ENCODE measurements at regions of chr10 and their contacts with region 1.

Region 1: GRCh38 chr10:89793649-89794254 is 92.4 kb downstream of the KIF20B start:
- DNase-seq: peak; percentile 31
- H3K4me3 ChIP-seq: no peak overlapping the region
- H3K27ac ChIP-seq: no peak overlapping the region
- H3K4me1 ChIP-seq: no peaks in the 10 kb centered on the region
- H3K27me3 ChIP-seq: no peaks in the 10 kb centered on the region
- CTCF ChIP-seq: peak; percentile 67

Region 2: GRCh38 chr10:89516149-89516832 is 277.5 kb before region 1 on chr10:
- intact Hi-C with region 1: no loop called
- DNase-seq: peak; percentile 32
- H3K4me3 ChIP-seq: no peak overlapping the region
- H3K27ac ChIP-seq: peak overlapping the region; percentile 3
- H3K4me1 ChIP-seq: no peaks in the 10 kb centered on the region
- H3K27me3 ChIP-seq: no peaks in the 10 kb centered on the region
- CTCF ChIP-seq: no peak

Region 3: GRCh38 chr10:89954787-89955566 is 161.2 kb after region 1 on chr10:
- intact Hi-C with region 1: loop called (anchors 10 kb)
- DNase-seq: no peak
- H3K4me3 ChIP-seq: no peak overlapping the region
- H3K27ac ChIP-seq: no peak overlapping the region
- H3K4me1 ChIP-seq: no peaks in the 10 kb centered on the region
- H3K27me3 ChIP-seq: no peaks in the 10 kb centered on the region
- CTCF ChIP-seq: no peak

Region 4: GRCh38 chr10:90138844-90139243 is 345.1 kb after region 1 on chr10:
- intact Hi-C with region 1: loop called (anchors 10 kb)
- DNase-seq: no peak
- H3K4me3 ChIP-seq: no peak overlapping the region
- H3K27ac ChIP-seq: no peak overlapping the region
- H3K4me1 ChIP-seq: no peaks in the 10 kb centered on the region
- H3K27me3 ChIP-seq: no peaks in the 10 kb centered on the region
- CTCF ChIP-seq: peak; percentile 31

Region 5: DNA sequence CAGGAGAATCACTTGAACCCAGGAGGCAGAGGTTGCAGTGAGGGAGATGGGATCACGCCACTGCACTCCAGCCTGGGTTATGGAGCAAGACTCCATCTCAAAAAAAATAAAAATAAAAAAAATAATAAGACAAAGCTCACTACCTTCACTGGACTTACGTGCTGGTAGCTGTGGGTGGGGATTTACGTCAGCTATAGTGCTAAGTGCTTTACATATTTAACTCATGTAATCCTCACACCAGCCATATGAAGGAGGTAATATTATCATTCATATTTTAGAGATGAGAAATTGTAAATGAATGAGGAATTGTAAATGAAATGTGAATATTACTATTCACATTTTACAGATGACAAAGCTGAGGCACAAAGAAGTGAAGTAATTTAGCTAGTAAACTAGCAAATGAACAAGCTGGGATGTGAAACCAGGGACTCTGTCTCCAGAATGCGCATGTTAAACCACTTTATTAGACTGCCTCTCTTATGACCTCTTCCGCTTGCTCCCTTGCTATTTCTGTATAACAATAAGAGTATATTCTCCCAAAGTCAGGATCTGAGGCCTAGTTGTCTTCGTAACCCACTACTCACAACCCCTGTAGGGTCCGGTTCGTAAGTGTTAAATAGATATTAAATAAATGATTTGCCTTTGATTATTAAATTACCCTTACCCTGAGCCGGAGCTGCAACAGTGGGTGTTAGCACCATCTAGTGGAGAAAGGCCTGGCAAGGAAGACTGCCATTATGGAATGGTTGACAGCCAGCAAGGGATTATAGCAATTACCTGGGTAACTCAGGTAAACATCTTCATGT is 993.8 kb after region 1 on chr10:
- intact Hi-C with region 1: loop called (anchors 5 kb)
- DNase-seq: peak; percentile 34
- H3K4me3 ChIP-seq: no peak overlapping the region
- H3K27ac ChIP-seq: no peak overlapping the region
- H3K4me1 ChIP-seq: no peaks in the 10 kb centered on the region
- H3K27me3 ChIP-seq: no peaks in the 10 kb centered on the region
- CTCF ChIP-seq: peak; percentile 58

Measured in colonic mucosa (tissue), 4 donors.